ENCODE measurements at regions of chr3 and their contacts with region 1.

Region 1: GRCh38 chr3:12891985-12892839 is 50.8 kb upstream of the RPL32 start:
- DNase-seq: peak; percentile 82
- H3K4me3 Mint-ChIP-seq: no peak overlapping the region
- H3K27ac Mint-ChIP-seq: no peak overlapping the region
- H3K4me1 Mint-ChIP-seq: peaks cover 6% of the 10 kb centered on the region
- H3K27me3 Mint-ChIP-seq: peaks cover 35% of the 10 kb centered on the region

Region 2: GRCh38 chr3:12706504-12707253 is 185.5 kb before region 1 on chr3:
- intact Hi-C with region 1: loop called (anchors 10 kb)
- DNase-seq: peak; percentile 89
- H3K4me3 Mint-ChIP-seq: no peak overlapping the region
- H3K27ac Mint-ChIP-seq: no peak overlapping the region
- H3K4me1 Mint-ChIP-seq: no peaks in the 10 kb centered on the region
- H3K27me3 Mint-ChIP-seq: peaks cover 8% of the 10 kb centered on the region

Region 3: DNA sequence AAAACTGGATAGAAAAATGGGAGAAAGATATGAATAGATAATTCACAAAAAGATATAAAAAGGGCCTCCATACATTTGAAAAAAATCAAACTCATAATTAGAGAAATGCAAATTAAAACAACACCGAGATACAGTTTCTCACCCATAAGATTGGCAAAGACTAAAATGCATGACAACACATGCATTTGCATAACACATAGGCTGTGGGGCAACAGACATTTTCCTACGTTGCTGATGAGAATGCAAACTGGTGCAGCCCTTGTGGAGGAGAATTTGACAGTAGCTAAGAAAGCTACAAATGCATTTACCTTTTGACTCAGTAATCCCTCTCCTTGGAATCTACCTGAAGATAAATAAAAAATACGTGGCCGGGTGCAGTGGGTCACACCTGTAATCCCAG is 107.1 kb before region 1 on chr3:
- intact Hi-C with region 1: loop called (anchors 5 kb)
- DNase-seq: no peak
- H3K4me3 Mint-ChIP-seq: no peak overlapping the region
- H3K27ac Mint-ChIP-seq: no peak overlapping the region
- H3K4me1 Mint-ChIP-seq: no peaks in the 10 kb centered on the region
- H3K27me3 Mint-ChIP-seq: peaks cover 24% of the 10 kb centered on the region

Region 4: DNA sequence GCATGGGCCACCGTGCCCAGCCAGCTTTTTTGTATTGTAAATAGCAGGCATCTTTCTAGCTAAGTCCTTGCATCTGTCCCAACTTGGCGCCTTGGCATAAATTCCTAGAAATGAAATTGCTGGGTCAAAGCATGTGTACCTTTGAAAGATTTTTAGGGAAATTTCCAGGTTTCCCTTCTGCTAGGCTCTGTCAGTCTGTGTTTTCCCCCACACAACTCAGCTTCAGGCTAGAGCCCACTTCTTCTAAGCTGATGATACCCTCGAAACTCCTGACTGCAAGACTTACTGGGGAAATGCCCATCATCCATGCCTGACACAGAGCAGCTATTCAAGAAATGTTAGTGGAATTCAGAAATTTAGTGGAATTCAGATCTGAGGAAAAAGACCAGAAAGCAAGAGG is 40.0 kb before region 1 on chr3:
- intact Hi-C with region 1: no loop called
- DNase-seq: no peak
- H3K4me3 Mint-ChIP-seq: no peak overlapping the region
- H3K27ac Mint-ChIP-seq: no peak overlapping the region
- H3K4me1 Mint-ChIP-seq: no peaks in the 10 kb centered on the region
- H3K27me3 Mint-ChIP-seq: peaks cover 16% of the 10 kb centered on the region

Region 5: DNA sequence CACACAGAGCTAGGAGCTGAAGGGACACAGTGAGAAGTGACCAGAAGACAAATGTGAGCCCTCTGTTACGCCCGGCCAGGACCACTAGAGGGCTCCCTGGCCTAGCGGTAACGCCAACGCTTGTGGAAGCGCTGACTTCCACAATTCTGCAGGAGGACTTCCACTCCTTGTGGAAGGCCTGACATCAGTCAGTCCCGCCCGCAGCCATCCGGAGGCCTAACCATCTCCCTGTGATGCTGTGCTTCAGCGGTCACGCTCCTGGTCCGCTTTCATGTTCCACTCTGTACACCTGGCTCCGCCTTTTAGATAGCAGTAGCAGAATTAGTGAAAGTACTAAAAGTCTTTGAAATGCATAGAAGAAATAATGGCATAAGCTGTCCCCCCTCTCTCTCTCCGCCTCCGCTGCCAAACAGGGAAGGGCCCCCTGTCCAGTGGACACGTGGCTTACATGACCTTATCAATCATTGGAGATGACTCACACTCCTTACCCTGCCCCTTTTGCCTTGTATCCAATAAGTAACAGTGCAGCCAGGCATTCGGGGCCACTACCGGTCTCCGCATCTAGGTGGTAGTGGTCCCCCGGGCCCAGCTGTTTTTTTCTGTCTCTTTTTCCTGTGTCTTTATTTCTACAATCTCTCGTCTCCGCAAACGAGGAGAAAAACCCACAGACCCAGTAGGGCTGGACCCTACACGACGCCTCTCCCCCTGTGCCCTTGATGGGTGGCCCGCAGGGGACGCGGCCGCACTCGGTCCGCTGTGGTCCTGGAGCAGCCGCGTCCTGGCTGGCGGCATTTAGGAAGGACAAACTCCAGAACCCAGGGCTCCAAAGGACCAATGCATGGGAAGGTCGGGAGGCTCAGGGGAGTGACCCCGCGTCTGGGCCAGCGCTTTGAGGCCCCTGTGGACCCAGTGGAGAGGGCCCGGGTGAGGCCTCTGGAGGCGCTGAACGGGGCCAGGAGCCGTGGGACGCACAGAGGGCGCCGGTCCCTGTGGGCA is 23.9 kb before region 1 on chr3:
- intact Hi-C with region 1: loop called (anchors 1 kb)
- DNase-seq: peak; percentile 88
- H3K4me3 Mint-ChIP-seq: peak overlapping the region; percentile 79
- H3K27ac Mint-ChIP-seq: peak overlapping the region; percentile 29
- H3K4me1 Mint-ChIP-seq: peaks cover 12% of the 10 kb centered on the region
- H3K27me3 Mint-ChIP-seq: peaks cover 31% of the 10 kb centered on the region